T-cell (primary cell): ENCODE measurements at regions of chr4 and their contacts with region 1.

Region 1: DNA sequence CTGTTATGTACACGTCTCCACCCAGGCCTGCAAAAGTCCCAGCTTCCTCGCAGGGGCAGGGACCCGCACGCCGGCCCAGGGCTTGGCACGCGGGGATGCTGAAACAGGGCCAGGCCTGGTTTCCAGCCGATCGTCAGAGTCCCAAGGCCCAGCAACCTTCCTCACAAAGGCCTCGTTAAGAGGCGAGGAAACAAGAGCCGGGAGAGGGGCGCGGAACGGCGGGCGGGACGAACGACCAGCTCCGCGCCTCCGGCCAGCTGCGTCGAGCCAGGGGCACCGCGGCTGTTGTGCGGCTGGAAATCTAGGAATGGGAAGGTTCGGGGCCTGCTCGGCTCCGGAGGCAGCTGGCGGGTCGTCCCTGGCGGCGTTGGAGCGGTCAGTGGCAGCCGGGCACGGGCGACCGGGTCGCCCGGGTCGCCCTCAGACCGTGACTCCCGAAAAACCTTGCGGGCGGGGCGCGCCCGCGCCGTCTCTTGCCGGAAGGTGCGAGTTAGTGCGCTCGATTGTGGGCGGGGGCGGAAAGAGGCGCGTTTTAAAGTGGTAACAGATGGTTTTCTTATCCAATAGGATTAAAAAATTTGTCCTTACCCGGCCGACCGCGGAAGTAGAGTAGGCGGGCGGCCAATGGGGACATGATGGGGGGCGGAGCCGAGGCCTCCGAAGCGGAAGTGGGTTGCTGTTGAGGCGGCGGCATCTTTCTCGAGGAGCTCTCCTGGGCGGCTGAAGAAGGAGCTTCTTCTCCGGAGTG is at the start of gene RNF4:
- DNase-seq: peak; percentile 84 to 97 (median 95)
- ATAC-seq: peak; percentile 85 to 87 (median 86)
- H3K4me3 ChIP-seq: peak within 1 kb of the TSS; percentile 77 to 96
- H3K4me3 Mint-ChIP-seq: peak within 1 kb of the TSS; percentile 97 to 98 (median 98)
- H3K27ac ChIP-seq: peak within 1 kb of the TSS; percentile 90
- H3K27ac Mint-ChIP-seq: peak within 1 kb of the TSS; percentile 97 to 98
- H3K4me1 ChIP-seq: peaks cover 21 to 49% of the 10 kb centered on the region in 2 experiments
- H3K4me1 Mint-ChIP-seq: peaks cover 45 to 56% (median 46%) of the 10 kb centered on the region in 3 donors
- H3K27me3 ChIP-seq: no peaks in the 10 kb centered on the region
- H3K27me3 Mint-ChIP-seq: no peaks in the 10 kb centered on the region
- total RNA-seq, gene RNF4: 89.2 to 107 (median 104) TPM

Region 2: GRCh38 chr4:2441393-2442174 is 27.0 kb before region 1 on chr4:
- CTCF ChIA-PET with region 1: no interaction called
- POLR2A ChIA-PET with region 1: no interaction called
- DNase-seq: peak; percentile 40 to 81 (median 64)
- ATAC-seq: peak; percentile 85 to 98 (median 88)
- H3K4me3 ChIP-seq: no peak overlapping the region
- H3K4me3 Mint-ChIP-seq: no peak overlapping the region
- H3K27ac ChIP-seq: no peak overlapping the region
- H3K27ac Mint-ChIP-seq: no peak overlapping the region
- H3K4me1 ChIP-seq: peaks cover 0 to 9% of the 10 kb centered on the region in 2 experiments
- H3K4me1 Mint-ChIP-seq: peaks cover 0 to 7% (median 3%) of the 10 kb centered on the region in 3 donors
- H3K27me3 ChIP-seq: no peaks in the 10 kb centered on the region
- H3K27me3 Mint-ChIP-seq: no peaks in the 10 kb centered on the region

Region 3: GRCh38 chr4:2484993-2485392 is 16.4 kb after region 1 on chr4:
- CTCF ChIA-PET with region 1: interaction called in 1 of 2 experiments, 7 read pairs
- POLR2A ChIA-PET with region 1: interaction called, 3 to 17 read pairs
- DNase-seq: peak; percentile 37 to 85 (median 70)
- ATAC-seq: peak; percentile 88 to 93 (median 90)
- H3K4me3 ChIP-seq: peak overlapping the region; percentile 20 to 29
- H3K4me3 Mint-ChIP-seq: peak overlapping the region; percentile 73 to 76 (median 73)
- H3K27ac ChIP-seq: peak overlapping the region; percentile 62
- H3K27ac Mint-ChIP-seq: peak overlapping the region; percentile 83
- H3K4me1 ChIP-seq: peaks cover 46 to 88% of the 10 kb centered on the region in 2 experiments
- H3K4me1 Mint-ChIP-seq: peaks cover 81 to 88% (median 88%) of the 10 kb centered on the region in 3 donors
- H3K27me3 ChIP-seq: no peaks in the 10 kb centered on the region
- H3K27me3 Mint-ChIP-seq: no peaks in the 10 kb centered on the region

Region 4: GRCh38 chr4:2570551-2571222 is 102.1 kb after region 1 on chr4:
- CTCF ChIA-PET with region 1: no interaction called
- POLR2A ChIA-PET with region 1: interaction called in 1 of 2 experiments, 14 read pairs
- DNase-seq: peak; percentile 4 to 86 (median 72)
- ATAC-seq: peak; percentile 90 to 100 (median 92)
- H3K4me3 ChIP-seq: no peak overlapping the region
- H3K4me3 Mint-ChIP-seq: peak overlapping the region; percentile 14 to 61 (median 42)
- H3K27ac ChIP-seq: peak overlapping the region; percentile 39
- H3K27ac Mint-ChIP-seq: peak overlapping the region; percentile 6 to 73
- H3K4me1 ChIP-seq: peaks cover 9 to 33% of the 10 kb centered on the region in 2 experiments
- H3K4me1 Mint-ChIP-seq: peaks cover 60 to 68% (median 63%) of the 10 kb centered on the region in 3 donors
- H3K27me3 ChIP-seq: no peaks in the 10 kb centered on the region
- H3K27me3 Mint-ChIP-seq: no peaks in the 10 kb centered on the region